ENCODE measurements at regions of chr17 and their contacts with region 1.

Region 1: GRCh38 chr17:17098426-17099179 is 56.3 kb downstream of the MPRIP start:
- DNase-seq: no peak
- ATAC-seq: peak; percentile 70

Region 2: GRCh38 chr17:17075038-17075781 is 23.4 kb before region 1 on chr17:
- intact Hi-C with region 1: loop called (anchors 2 kb)
- DNase-seq: peak; percentile 70
- ATAC-seq: peak; percentile 27

Region 3: GRCh38 chr17:17126131-17127110 is 27.8 kb after region 1 on chr17:
- intact Hi-C with region 1: no loop called
- DNase-seq: peak; percentile 47
- ATAC-seq: peak; percentile 41

Region 4: DNA sequence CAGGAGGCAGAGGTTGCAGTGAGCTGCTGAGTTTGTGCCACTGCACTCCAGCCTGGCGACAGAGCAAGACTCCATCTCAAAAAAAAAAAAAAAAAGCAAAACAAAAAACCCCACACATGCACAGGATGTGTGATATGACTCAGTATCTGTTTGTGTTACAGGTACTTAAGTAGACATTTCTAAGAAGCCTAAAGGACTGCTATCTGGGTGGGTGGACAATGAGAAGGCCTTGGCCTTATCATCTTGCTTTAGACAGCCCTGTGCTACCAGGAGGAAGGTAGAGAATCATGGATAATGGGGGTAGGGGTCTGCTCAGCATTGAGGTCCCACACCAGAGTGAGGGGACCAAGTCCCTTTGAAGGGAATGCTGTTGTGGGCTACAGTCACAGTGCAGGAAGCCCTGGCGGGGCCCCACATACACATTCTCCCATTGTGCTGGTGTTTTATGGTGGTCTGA is 80.8 kb after region 1 on chr17:
- intact Hi-C with region 1: no loop called
- DNase-seq: no peak
- ATAC-seq: no peak